Body of pancreas (tissue), 4 donors: ENCODE measurements at regions of chr13 and their contacts with region 1.

Region 1: GRCh38 chr13:110593430-110594130 is 21.8 kb upstream of the NAXD start:
- DNase-seq: peak in 3 of 4 donors; percentile 37 to 62 (median 46)
- ATAC-seq: peak; percentile 94
- H3K4me3 ChIP-seq: no peak overlapping the region
- H3K27ac ChIP-seq: no peak overlapping the region
- H3K4me1 ChIP-seq: no peaks in the 10 kb centered on the region
- H3K27me3 ChIP-seq: no peaks in the 10 kb centered on the region
- CTCF ChIP-seq: peak in 6 of 7 experiments; percentile 51 to 84 (median 79)
- POLR2A ChIP-seq: no peak

Region 2: DNA sequence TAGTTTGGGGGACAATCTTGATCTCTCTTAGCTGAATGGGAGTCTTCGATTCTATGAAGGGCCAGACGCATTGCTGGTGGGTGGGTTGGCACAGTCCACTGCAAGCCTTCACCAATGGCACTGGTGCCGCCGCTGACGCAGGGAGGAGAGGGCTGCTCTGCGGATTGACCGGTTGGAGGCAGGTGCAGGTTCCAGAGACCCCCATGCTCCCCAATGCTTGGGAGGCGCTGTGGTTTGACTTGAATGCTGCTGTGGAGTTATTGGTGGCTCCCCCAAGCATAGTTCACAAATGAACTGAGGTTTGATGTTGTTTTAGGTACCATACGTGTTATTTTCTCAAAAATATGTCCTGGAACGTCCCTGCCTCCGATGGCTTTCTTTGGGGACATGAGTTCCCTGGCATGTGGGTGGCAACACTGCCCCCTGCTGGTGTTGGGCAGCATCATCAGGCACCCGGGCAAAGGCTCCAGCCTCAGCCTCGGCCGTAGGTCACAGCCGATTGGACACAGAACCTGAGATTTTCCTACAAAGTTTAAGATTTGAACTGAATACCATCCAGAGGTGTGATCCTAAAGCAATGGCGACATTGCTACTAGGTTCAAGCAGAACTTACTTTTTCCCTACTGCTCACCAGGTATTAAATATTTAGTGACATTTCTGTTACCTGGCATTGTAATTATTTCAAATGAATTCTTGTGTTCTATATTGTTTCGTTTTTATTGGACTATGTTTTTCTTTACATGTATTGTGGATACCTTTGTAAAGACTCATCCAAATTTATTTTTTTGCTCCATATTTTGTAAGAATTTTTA is 225.8 kb after region 1 on chr13:
- intact Hi-C with region 1: loop called (anchors 5 kb)
- DNase-seq: peak; percentile 79 to 83 (median 80)
- ATAC-seq: peak; percentile 97
- H3K4me3 ChIP-seq: no peak overlapping the region
- H3K27ac ChIP-seq: no peak overlapping the region
- H3K4me1 ChIP-seq: peaks cover 7% of the 10 kb centered on the region
- H3K27me3 ChIP-seq: no peaks in the 10 kb centered on the region
- CTCF ChIP-seq: peak; percentile 90 to 98 (median 94)
- POLR2A ChIP-seq: no peak

Region 3: GRCh38 chr13:110907951-110908898 is 314.6 kb after region 1 on chr13:
- intact Hi-C with region 1: no loop called
- DNase-seq: peak; percentile 69 to 86 (median 76)
- ATAC-seq: peak; percentile 84
- H3K4me3 ChIP-seq: no peak overlapping the region
- H3K27ac ChIP-seq: peak overlapping the region; percentile 37 to 99 (median 80)
- H3K4me1 ChIP-seq: peaks cover 73% of the 10 kb centered on the region
- H3K27me3 ChIP-seq: no peaks in the 10 kb centered on the region
- CTCF ChIP-seq: no peak
- POLR2A ChIP-seq: peak in 1 of 3 donors; percentile 33